Prostate gland (tissue), 2 donors: ENCODE measurements at regions of chr16 and their contacts with region 1.

Region 1: GRCh38 chr16:30122604-30123160 is 338 bp downstream of the MAPK3 start:
- DNase-seq: no peak
- H3K4me3 ChIP-seq: peak overlapping the region; percentile 76 to 88
- H3K27ac ChIP-seq: peak overlapping the region; percentile 89 to 92
- H3K4me1 ChIP-seq: peaks cover 8% of the 10 kb centered on the region
- H3K27me3 ChIP-seq: no peaks in the 10 kb centered on the region
- CTCF ChIP-seq: no peak
- POLR2A ChIP-seq: no peak

Region 2: GRCh38 chr16:30065143-30065850 is 57.4 kb before region 1 on chr16 and contains the start of gene ALDOA:
- intact Hi-C with region 1: loop called (anchors 5 kb)
- DNase-seq: peak; percentile 98
- H3K4me3 ChIP-seq: peak within 1 kb of the TSS; percentile 86 to 98
- H3K27ac ChIP-seq: peak within 1 kb of the TSS; percentile 91 to 97
- H3K4me1 ChIP-seq: peaks cover 44% of the 10 kb centered on the region
- H3K27me3 ChIP-seq: no peaks in the 10 kb centered on the region
- CTCF ChIP-seq: peak in 2 of 4 experiments; percentile 2 to 17
- POLR2A ChIP-seq: peak; percentile 99
- total RNA-seq, gene ALDOA: 884 to 943 TPM

Region 3: DNA sequence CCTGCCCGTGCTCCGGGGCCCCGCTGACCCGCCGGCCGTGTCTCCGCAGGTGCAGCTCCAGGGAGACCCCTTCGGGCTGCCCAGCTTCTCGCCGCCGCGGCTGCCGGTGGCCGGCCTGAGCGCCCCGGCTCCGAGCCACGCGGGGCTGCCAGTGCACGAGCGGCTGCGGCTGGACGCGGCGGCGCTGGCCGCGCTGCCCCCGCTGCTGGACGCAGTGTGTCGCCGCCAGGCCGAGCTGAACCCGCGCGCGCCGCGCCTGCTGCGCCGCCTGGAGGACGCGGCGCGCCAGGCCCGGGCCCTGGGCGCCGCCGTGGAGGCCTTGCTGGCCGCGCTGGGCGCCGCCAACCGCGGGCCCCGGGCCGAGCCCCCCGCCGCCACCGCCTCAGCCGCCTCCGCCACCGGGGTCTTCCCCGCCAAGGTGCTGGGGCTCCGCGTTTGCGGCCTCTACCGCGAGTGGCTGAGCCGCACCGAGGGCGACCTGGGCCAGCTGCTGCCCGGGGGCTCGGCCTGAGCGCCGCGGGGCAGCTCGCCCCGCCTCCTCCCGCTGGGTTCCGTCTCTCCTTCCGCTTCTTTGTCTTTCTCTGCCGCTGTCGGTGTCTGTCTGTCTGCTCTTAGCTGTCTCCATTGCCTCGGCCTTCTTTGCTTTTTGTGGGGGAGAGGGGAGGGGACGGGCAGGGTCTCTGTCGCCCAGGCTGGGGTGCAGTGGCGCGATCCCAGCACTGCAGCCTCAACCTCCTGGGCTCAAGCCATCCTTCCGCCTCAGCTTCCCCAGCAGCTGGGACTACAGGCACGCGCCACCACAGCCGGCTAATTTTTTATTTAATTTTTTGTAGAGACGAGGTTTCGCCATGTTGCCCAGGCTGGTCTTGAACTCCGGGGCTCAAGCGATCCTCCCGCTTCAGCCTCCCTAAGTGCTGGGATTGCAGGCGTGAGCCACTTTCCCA is 779.6 kb after region 1 on chr16:
- intact Hi-C with region 1: no loop called
- DNase-seq: peak; percentile 48
- H3K4me3 ChIP-seq: peak overlapping the region; percentile 39 to 50
- H3K27ac ChIP-seq: peak overlapping the region; percentile 86
- H3K4me1 ChIP-seq: peaks cover 3% of the 10 kb centered on the region
- H3K27me3 ChIP-seq: no peaks in the 10 kb centered on the region
- CTCF ChIP-seq: peak in 3 of 4 experiments; percentile 18 to 63 (median 21)
- POLR2A ChIP-seq: no peak